Endothelial cell of umbilical vein (primary cell): ENCODE measurements at regions of chr5 and their contacts with region 1.

Region 1: GRCh38 chr5:124902097-124902821 is 155.8 kb upstream of the ZNF608 start:
- DNase-seq: peak; percentile 30
- H3K4me3 ChIP-seq: no peak overlapping the region
- H3K27ac ChIP-seq: no peak overlapping the region
- H3K4me1 ChIP-seq: peaks cover 16% of the 10 kb centered on the region
- H3K27me3 ChIP-seq: no peaks in the 10 kb centered on the region
- CTCF ChIP-seq: no peak
- POLR2A ChIP-seq: no peak

Region 2: GRCh38 chr5:123937230-123937629 is 965.0 kb before region 1 on chr5:
- CTCF ChIA-PET with region 1: no interaction called
- POLR2A ChIA-PET with region 1: no interaction called
- dilution Hi-C with region 1: no loop called
- intact Hi-C with region 1: loop called (anchors 5 kb)
- DNase-seq: peak; percentile 68
- H3K4me3 ChIP-seq: no peak overlapping the region
- H3K27ac ChIP-seq: no peak overlapping the region
- H3K4me1 ChIP-seq: no peaks in the 10 kb centered on the region
- H3K27me3 ChIP-seq: no peaks in the 10 kb centered on the region
- CTCF ChIP-seq: peak; percentile 51 to 62
- POLR2A ChIP-seq: no peak

Region 3: DNA sequence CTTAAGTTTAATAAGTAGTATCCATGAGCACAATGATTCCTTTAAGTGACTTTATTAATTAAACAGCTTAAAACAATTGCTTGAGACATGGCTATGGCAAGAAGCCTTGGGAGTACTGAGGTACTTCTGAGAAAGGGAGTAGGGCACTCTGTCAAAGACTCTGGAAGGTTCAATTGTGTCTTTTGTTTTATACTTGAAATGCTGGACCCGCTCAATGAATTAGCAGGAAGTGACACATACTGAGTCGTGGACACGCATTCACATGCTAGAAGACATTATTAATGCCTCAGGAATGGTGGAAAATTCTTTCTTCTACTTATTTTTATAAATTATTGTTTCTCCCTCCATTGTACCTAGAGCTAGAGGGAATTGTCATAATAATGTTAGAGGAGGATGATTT is 191.5 kb after region 1 on chr5:
- CTCF ChIA-PET with region 1: no interaction called
- POLR2A ChIA-PET with region 1: no interaction called
- dilution Hi-C with region 1: no loop called
- intact Hi-C with region 1: loop called (anchors 5 kb)
- DNase-seq: peak; percentile 90
- H3K4me3 ChIP-seq: no peak overlapping the region
- H3K27ac ChIP-seq: peak overlapping the region; percentile 83
- H3K4me1 ChIP-seq: peaks cover 12% of the 10 kb centered on the region
- H3K27me3 ChIP-seq: no peaks in the 10 kb centered on the region
- CTCF ChIP-seq: no peak
- POLR2A ChIP-seq: no peak

Region 4: DNA sequence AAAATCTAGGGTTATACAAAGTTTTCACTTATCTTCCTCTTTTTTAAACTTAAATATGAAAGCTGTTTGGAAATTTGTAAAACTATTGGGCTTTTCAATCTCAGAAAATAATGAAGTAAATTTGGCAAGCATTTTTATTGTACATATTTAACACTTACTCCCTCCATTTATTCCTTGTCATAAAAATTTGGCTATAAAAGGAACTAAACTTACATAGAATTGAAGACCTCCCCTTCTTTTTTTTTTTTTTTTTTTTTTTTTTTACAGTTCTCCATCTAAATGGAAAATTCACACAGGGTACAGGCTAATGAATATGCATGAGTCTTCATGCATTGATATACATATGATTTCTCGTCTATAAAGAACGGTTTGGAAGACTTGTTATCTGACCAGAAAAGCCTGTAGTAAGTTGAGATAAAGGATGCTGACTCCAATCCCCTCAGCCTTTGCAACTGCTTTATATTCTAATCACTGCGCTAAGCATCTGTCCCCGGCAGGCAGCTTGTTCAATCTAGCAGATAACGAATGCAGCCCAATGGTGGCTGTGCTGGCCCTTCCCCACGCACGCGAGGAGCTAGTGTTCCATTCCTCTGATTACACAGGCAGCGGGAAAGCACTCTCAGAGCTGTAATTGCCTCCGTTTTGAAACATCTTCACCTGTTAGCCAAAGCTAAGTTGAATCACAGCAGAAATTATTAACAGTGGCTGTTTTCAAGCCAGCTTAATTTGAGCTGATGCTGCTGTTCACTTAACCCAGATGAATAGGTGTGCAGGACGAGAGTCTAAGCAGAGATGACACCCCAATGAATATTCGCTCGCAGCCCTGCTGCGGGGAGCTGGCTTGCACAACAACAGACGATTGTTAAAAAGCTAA is 297.9 kb after region 1 on chr5:
- CTCF ChIA-PET with region 1: no interaction called
- POLR2A ChIA-PET with region 1: no interaction called
- dilution Hi-C with region 1: no loop called
- intact Hi-C with region 1: loop called (anchors 10 kb)
- DNase-seq: peak; percentile 13
- H3K4me3 ChIP-seq: peak overlapping the region in 1 of 3 experiments; percentile 6
- H3K27ac ChIP-seq: no peak overlapping the region
- H3K4me1 ChIP-seq: no peaks in the 10 kb centered on the region
- H3K27me3 ChIP-seq: no peaks in the 10 kb centered on the region
- CTCF ChIP-seq: no peak
- POLR2A ChIP-seq: no peak

Region 5: DNA sequence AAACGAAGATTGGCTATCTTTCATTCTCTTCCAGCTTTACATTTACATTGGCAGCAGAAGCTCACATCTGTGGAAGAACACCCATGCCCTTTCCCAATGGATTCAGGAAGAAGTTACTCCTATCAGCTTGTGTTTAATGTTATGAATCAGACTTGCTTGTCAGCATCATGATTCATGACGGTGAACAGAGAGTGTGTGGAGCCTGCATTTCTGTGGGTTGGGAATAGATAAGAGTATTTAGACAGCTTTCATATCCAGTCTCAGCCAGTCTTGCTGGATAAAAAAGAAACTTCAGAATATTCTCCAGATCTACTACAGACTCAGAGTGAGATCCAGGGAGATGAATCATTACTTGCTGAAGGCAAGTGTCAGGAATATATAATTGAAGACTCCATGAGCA is 657.0 kb after region 1 on chr5:
- CTCF ChIA-PET with region 1: no interaction called
- POLR2A ChIA-PET with region 1: no interaction called
- dilution Hi-C with region 1: no loop called
- intact Hi-C with region 1: loop called (anchors 10 kb)
- DNase-seq: peak; percentile 99
- H3K4me3 ChIP-seq: peak overlapping the region in 1 of 3 experiments; percentile 13
- H3K27ac ChIP-seq: peak overlapping the region; percentile 51
- H3K4me1 ChIP-seq: peaks cover 17% of the 10 kb centered on the region
- H3K27me3 ChIP-seq: no peaks in the 10 kb centered on the region
- CTCF ChIP-seq: no peak
- POLR2A ChIP-seq: peak; percentile 74